GM12878 (cell line): ENCODE measurements at regions of chr1 and their contacts with region 1.

Region 1: DNA sequence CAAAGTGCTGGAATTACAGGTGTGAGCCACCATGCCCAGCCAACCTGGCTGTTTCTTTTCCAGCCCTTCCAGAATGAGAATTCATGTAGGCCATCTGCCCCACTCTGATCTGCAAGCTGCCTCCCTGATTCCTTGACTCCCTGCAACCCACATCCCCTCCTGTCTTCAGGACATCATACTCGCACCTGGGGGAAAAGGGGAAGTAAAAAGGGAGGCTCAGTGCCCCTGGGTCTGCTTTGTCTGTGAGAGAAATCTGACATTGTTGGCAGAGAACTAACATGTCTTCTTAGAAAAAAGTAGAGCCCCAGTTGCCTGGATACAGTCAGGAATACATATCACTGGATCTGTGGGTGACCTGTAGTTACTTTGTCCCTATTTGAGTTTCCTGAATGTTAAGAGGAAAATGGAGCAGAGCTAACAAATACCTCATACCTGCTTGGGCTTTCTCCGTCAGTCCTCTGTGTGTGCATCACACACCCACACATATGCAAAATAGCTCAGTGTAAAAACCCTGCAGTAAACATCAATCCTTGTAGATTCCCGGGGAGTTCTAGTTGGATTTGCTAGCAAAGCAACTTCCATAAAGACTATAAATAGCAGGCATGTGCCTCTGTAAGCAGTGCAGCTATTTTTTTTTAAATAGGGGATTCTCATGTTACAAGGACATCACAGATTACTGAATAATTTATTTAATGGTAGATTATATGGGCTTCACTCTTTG is 62.9 kb downstream of the TEX35 start:
- DNase-seq: peak; percentile 19
- ATAC-seq: peak; percentile 21; the same call in 1 of the 3 replicates
- H3K4me3 ChIP-seq: peak overlapping the region; percentile 34; the same call in 1 of the 2 replicates
- H3K27ac ChIP-seq: peak overlapping the region; percentile 9; the same call in 1 of the 2 replicates
- H3K4me1 ChIP-seq: peaks cover 61% of the 10 kb centered on the region
- H3K27me3 ChIP-seq: no peaks in the 10 kb centered on the region
- CTCF ChIP-seq: no peak
- EP300 ChIP-seq: no peak
- POLR2A ChIP-seq: no peak
- RAD21 ChIP-seq: no peak

Region 2: GRCh38 chr1:178587975-178588374 is 12.2 kb after region 1 on chr1:
- CTCF ChIA-PET with region 1: interaction called, 3 read pairs
- POLR2A ChIA-PET with region 1: no interaction called
- RAD21 ChIA-PET with region 1: no interaction called
- SMC1A ChIA-PET with region 1: interaction called, 13 read pairs
- in situ Hi-C with region 1: no loop called
- intact Hi-C with region 1: no loop called
- DNase-seq: no peak
- ATAC-seq: no peak
- H3K4me3 ChIP-seq: no peak overlapping the region
- H3K27ac ChIP-seq: no peak overlapping the region
- H3K4me1 ChIP-seq: peaks cover 1% of the 10 kb centered on the region
- H3K27me3 ChIP-seq: no peaks in the 10 kb centered on the region
- CTCF ChIP-seq: no peak
- EP300 ChIP-seq: no peak
- POLR2A ChIP-seq: no peak
- RAD21 ChIP-seq: no peak